Naive thymus-derived CD4-positive, alpha-beta T cell (primary cell): ENCODE measurements at regions of chr17 and their contacts with region 1.

Region 1: DNA sequence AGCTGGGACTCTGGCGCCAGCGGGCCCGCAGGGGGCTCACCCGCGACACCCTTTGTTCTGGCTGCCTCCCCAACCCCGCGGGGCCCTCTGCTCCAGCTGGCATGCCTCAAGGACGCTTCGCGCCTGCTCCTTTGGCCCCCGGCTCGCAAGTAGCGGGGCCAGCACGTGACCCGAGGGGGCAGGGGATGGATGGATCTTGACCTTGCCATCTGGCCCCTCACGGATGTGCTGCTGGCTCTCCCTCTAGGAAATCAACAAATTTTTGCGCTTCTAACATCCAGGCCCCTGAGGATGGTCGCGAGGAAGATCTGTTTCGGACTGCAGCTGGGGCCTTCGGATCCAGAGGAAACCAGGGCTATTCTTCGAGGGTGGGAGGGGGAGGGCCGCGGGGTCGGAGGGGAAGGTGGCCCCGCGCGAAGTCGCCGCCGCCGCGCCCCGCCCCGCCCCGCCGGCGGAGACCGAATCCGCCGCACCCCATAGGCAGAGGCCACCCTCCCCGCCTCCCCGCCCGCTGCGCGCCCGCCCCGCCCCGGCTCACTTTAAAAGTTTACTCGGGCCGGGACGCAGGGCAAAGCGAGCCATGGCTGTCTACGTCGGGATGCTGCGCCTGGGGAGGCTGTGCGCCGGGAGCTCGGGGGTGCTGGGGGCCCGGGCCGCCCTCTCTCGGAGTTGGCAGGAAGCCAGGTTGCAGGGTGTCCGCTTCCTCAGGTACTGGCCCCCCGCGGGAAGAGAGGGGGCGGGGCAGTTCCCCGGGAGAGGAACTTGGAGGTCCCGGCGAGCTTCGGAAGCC is at the start of gene ACSF2:
- DNase-seq: peak; percentile 23 to 77 (median 55)
- ATAC-seq: peak; percentile 92
- H3K4me3 ChIP-seq: peak within 1 kb of the TSS; percentile 67
- H3K4me3 Mint-ChIP-seq: peak within 1 kb of the TSS; percentile 82 to 91 (median 89)
- H3K27ac ChIP-seq: peak within 1 kb of the TSS; percentile 65
- H3K27ac Mint-ChIP-seq: peak within 1 kb of the TSS; percentile 70 to 94 (median 83)
- H3K4me1 ChIP-seq: peaks cover 24 to 25% of the 10 kb centered on the region in 2 donors
- H3K4me1 Mint-ChIP-seq: peaks cover 11 to 52% (median 35%) of the 10 kb centered on the region in 7 donors
- H3K27me3 ChIP-seq: no peaks in the 10 kb centered on the region
- H3K27me3 Mint-ChIP-seq: no peaks in the 10 kb centered on the region
- total RNA-seq, gene ACSF2: 20.1 to 36.2 (median 22.9) TPM

Region 2: DNA sequence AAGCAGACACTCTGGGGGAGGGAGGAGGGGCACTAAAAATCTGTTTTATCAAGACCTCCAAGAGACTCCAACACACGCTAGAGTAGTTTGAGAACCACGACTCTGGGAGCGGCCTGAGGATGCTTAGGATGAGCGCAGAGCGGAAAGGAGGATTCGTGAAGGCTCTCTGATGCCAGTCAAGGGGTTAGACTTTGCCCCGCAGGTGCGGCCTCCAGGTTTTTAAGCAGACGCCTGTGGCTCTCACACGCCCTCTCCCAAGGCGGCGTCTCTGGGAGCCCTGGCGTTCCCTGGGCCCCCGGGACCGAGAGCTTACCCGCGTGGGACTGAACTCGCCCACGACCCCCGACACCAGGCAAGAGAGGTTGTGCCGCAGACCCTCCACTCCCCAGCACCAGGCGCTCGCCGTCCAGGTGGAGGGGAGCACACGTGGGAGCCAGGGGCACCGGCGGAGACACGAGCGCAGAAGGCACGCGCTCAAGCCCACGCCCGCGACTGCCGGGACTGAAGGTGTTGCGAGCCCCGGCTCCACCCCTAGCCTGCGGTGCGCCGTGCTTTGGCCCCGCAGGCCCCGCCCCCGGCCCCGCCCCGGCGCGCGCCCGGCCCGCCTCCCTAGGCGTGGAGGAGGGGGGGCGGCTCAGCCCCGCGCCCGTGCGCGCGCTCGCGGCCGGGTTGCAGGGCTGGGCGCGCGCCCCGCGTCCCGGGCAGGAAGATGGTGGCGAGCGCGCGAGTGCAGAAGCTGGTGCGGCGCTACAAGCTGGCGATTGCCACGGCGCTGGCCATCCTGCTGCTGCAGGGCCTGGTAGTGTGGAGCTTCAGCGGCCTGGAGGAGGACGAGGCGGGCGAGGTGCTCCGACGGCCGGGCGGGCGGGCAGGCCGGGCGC is 80.2 kb before region 1 on chr17 and contains the start of gene XYLT2:
- CTCF ChIA-PET with region 1: no interaction called
- POLR2A ChIA-PET with region 1: no interaction called
- intact Hi-C with region 1: loop called in 1 of 2 experiments (anchors 1 kb)
- DNase-seq: peak; percentile 89 to 98 (median 93)
- ATAC-seq: peak; percentile 98
- H3K4me3 ChIP-seq: peak within 1 kb of the TSS; percentile 79
- H3K4me3 Mint-ChIP-seq: peak within 1 kb of the TSS; percentile 77 to 94 (median 91)
- H3K27ac ChIP-seq: peak within 1 kb of the TSS; percentile 84
- H3K27ac Mint-ChIP-seq: peak within 1 kb of the TSS; percentile 85 to 95 (median 90)
- H3K4me1 ChIP-seq: peaks cover 22% of the 10 kb centered on the region in 2 donors
- H3K4me1 Mint-ChIP-seq: peaks cover 17 to 45% (median 34%) of the 10 kb centered on the region in 7 donors
- H3K27me3 ChIP-seq: no peaks in the 10 kb centered on the region
- H3K27me3 Mint-ChIP-seq: no peaks in the 10 kb centered on the region
- total RNA-seq, gene XYLT2: 18.6 to 43.7 (median 34.1) TPM

Region 3: DNA sequence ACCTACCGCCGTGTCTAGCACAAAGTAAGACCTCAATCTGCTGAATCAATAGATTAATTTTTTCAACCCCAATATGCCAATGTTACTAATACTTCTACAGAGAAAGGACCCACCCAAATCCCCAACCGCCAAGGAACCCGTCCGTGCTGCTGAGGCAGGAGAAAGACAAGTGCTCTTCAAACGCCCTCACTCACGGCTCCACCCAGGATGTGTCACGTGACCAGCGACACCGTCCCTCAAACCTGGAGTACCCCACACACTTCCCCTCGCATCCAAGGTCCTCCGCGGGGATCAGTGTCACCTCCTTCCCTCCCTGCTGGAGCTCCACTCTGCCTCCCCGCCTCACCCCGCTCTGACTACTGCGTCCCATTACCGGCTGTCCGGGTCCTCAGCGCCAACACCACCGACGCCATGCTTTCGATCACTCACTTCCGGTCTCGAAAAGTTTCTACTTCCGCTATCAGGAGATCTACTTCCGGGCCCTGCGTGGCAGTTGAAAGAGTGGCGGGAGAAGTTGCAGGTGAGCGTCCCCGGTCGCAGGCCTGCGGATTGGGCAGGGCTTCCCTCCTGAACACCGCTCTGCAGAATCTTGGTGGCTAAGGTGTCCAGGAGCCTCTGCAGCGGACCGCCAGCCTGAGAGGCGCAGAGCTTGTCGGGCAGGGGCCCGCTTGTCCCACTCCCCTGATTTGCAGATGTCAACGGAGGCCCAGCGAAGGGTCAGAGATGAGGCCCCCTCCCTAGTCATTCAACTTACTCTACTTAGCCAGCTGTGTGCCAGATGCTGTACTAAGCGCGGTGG is 52.9 kb before region 1 on chr17 and contains the starts of genes EME1 and MRPL27:
- CTCF ChIA-PET with region 1: no interaction called
- POLR2A ChIA-PET with region 1: no interaction called
- intact Hi-C with region 1: loop called in 1 of 2 experiments (anchors 2 kb)
- DNase-seq: peak; percentile 81 to 95 (median 92)
- ATAC-seq: peak; percentile 94
- H3K4me3 ChIP-seq: peak within 1 kb of the TSS; percentile 99
- H3K4me3 Mint-ChIP-seq: peak within 1 kb of the TSS; percentile 92 to 100 (median 98)
- H3K27ac ChIP-seq: peak within 1 kb of the TSS; percentile 99
- H3K27ac Mint-ChIP-seq: peak within 1 kb of the TSS; percentile 97 to 100 (median 99)
- H3K4me1 ChIP-seq: peaks cover 9 to 13% of the 10 kb centered on the region in 2 donors
- H3K4me1 Mint-ChIP-seq: peaks cover 18 to 41% (median 31%) of the 10 kb centered on the region in 7 donors
- H3K27me3 ChIP-seq: no peaks in the 10 kb centered on the region
- H3K27me3 Mint-ChIP-seq: no peaks in the 10 kb centered on the region
- total RNA-seq, gene EME1: 0.61 to 17.5 (median 2.2) TPM
- total RNA-seq, gene MRPL27: 29.5 to 64.7 (median 32.0) TPM

Region 4: GRCh38 chr17:50397111-50397918 is 28.6 kb before region 1 on chr17 and contains the start of gene LRRC59:
- CTCF ChIA-PET with region 1: interaction called, 8 read pairs
- POLR2A ChIA-PET with region 1: interaction called, 12 read pairs
- intact Hi-C with region 1: loop called (anchors 1 kb)
- DNase-seq: peak; percentile 86 to 99 (median 93)
- ATAC-seq: peak; percentile 100
- H3K4me3 ChIP-seq: peak within 1 kb of the TSS; percentile 69
- H3K4me3 Mint-ChIP-seq: peak within 1 kb of the TSS; percentile 78 to 99 (median 92)
- H3K27ac ChIP-seq: peak within 1 kb of the TSS; percentile 93
- H3K27ac Mint-ChIP-seq: peak within 1 kb of the TSS; percentile 83 to 96 (median 93)
- H3K4me1 ChIP-seq: peaks cover 15 to 18% of the 10 kb centered on the region in 2 donors
- H3K4me1 Mint-ChIP-seq: peaks cover 21 to 47% (median 34%) of the 10 kb centered on the region in 7 donors
- H3K27me3 ChIP-seq: no peaks in the 10 kb centered on the region
- H3K27me3 Mint-ChIP-seq: no peaks in the 10 kb centered on the region
- total RNA-seq, gene LRRC59: 27.6 to 67.1 (median 42.4) TPM